Posterior vena cava (tissue), 2 donors: ENCODE measurements at regions of chr6 and their contacts with region 1.

Region 1: DNA sequence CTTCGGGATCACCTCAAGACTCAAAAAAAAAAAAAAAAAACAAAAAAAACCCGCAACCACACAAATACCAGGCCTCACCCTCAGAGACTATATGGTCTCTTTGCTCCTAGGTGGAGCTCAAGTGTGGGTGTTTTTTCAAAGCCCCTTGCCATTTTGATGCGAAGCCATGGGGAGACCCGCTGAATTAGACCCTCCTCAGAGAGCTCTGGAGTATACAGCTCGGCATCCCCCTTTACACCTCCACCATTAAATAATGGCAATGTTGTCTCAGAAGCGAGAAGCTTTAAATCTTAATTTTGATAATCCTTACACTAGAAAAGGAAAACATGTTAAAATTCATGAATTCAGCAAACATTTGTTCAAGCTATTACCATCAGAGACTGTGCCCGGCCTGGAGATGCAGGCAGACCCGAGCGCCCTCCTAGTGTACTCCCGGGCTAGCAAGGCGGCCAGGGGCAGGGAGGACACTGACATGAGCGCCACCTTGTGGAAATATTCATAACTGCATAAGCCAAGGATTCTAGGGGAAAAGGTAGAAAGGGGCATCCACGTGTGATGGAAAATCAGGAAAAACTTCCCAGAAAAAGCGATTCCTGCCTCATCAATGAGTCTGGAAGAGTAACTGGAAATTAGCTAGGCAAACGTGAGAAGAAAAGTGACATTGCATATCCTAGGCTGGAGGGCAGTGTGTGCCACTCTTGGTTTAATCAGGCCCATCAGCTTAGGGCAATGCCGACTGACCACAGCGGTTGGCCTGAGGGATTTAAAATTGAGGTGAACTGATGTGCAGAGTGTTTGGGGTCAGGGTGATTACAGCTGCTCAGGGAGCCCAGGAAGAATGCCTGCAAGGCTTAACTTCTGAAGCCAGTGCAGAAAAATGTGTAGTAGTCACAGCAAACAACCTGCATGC is 72.5 kb downstream of the B3GAT2 start:
- DNase-seq: peak; percentile 80

Region 2: DNA sequence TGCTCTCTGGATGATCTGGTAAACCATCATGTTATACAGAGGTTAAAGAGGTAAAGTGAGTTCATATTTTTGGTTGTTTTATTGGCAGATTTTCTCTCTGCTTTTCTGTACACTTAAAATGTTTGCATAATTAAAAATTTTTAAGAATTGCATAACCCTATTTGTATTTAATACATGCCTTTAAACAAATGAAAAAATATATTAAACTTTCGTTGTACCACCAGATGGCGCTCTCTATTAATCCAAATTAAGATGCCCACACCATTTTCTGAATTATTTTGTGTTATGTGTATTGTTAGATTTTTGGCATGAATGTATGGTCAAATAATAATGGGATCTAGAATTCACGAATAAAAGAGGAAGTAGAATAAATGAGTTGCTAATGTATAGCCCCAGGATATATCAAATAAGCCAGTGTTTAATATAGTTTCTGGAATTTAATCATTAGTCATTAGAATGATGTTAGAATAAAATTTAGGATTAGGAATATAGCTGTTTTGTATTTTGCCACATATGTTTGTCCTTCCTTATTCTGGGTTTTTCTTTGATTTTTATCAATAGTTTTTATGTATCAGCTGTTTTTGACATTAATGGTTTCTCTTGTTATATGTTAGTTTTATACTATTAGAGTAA is 177.7 kb before region 1 on chr6:
- intact Hi-C with region 1: loop called in 1 of 2 experiments (anchors 10 kb)
- DNase-seq: no peak

Region 3: GRCh38 chr6:70857387-70858077 is 26.8 kb before region 1 on chr6:
- intact Hi-C with region 1: loop called in 1 of 2 experiments (anchors 1 kb)
- DNase-seq: no peak